ENCODE measurements at regions of chr7 and their contacts with region 1.

Region 1: GRCh38 chr7:138886501-138886917 is 88.5 kb upstream of the ATP6V0A4 start:
- DNase-seq: peak; percentile 47
- H3K4me3 Mint-ChIP-seq: no peak overlapping the region
- H3K27ac Mint-ChIP-seq: no peak overlapping the region
- H3K4me1 Mint-ChIP-seq: peaks cover 28% of the 10 kb centered on the region
- H3K27me3 Mint-ChIP-seq: peaks cover 7% of the 10 kb centered on the region

Region 2: DNA sequence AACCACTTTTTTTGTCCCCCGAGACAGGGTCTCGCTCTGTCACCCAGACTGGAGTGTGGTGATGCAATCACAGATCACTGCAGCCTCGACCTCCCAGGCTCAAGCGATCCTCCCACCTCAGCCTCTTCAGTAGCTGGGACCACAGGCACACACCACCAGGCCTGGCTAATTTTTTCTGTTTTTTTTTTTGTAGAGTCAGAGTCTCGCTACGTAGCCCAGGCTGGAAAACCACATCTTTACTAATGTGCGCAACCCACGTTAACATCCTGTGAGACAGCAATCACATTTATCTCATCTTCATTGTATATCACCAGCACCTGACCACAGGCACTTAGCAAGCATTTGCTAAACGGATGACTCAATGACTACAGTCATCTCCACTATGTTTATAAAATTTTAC is 10.7 kb before region 1 on chr7:
- intact Hi-C with region 1: loop called (anchors 1 kb)
- DNase-seq: peak; percentile 74
- H3K4me3 Mint-ChIP-seq: no peak overlapping the region
- H3K27ac Mint-ChIP-seq: peak overlapping the region; percentile 74
- H3K4me1 Mint-ChIP-seq: peaks cover 24% of the 10 kb centered on the region
- H3K27me3 Mint-ChIP-seq: no peaks in the 10 kb centered on the region

Region 3: DNA sequence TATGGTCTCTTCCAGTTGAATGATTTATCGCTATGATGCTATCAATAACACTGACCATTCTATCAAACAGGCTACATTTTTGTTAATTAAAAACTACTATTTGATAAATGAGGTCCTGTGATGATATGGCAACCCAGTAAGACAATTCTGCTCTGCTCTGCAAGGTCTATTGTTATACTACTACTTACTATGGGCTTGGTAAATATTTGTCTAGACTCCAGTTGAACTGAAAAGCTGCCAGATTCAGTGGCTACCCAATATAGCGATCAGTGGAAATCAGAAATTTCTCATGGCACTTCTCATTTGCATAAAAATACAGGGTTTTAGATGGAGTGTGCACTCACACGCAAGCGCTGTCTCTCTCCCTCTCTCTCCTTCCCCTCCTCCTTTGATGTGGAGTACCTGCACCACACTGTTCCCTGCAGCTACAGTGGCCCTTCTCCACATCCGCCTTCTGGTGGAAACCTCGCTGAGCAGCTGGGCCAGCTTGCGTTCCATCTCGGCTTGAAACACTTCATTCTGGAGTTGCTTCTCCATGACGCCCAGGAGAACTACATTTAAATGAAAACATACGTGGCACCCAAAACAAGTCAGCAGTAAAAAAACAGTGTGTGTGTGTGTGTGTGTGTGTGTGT is 16.8 kb after region 1 on chr7:
- intact Hi-C with region 1: loop called (anchors 1 kb)
- DNase-seq: peak; percentile 78
- H3K4me3 Mint-ChIP-seq: peak overlapping the region; percentile 74
- H3K27ac Mint-ChIP-seq: peak overlapping the region; percentile 84
- H3K4me1 Mint-ChIP-seq: peaks cover 49% of the 10 kb centered on the region
- H3K27me3 Mint-ChIP-seq: peaks cover 48% of the 10 kb centered on the region

Region 4: DNA sequence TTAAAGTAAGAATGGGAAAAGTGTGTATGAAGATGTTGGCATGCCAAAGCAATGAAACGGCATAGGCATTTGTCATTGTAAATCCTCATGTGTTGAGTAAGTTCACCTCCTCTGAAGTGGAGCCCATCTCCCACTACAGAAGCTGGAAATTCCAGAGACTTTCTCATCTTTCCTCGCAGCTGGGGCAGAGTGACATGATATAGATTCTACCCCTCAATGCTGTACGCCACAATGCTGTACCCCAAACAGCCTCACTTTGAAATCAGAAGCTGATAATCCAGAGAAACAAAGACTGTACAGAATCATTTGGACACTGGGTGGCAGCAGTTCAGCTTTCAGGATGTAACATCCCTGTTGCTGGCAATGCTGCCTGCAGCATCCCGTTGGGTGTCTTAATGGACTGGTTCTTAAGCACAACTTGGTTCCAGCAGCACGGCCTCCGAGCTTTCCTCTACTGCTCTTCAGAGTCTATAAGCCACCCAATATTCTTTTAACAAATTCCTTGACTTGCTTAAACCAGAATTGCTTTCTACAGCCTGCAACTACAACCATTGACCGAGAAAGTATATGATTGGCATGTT is 130.5 kb after region 1 on chr7:
- intact Hi-C with region 1: loop called (anchors 1 kb)
- DNase-seq: peak; percentile 52
- H3K4me3 Mint-ChIP-seq: no peak overlapping the region
- H3K27ac Mint-ChIP-seq: no peak overlapping the region
- H3K4me1 Mint-ChIP-seq: peaks cover 7% of the 10 kb centered on the region
- H3K27me3 Mint-ChIP-seq: peaks cover 11% of the 10 kb centered on the region

Region 5: GRCh38 chr7:139230774-139231512 is 344.4 kb after region 1 on chr7 and contains the start of gene UBN2:
- intact Hi-C with region 1: loop called (anchors 2 kb)
- DNase-seq: peak; percentile 89
- H3K4me3 Mint-ChIP-seq: peak within 1 kb of the TSS; percentile 100
- H3K27ac Mint-ChIP-seq: peak within 1 kb of the TSS; percentile 97
- H3K4me1 Mint-ChIP-seq: peaks cover 32% of the 10 kb centered on the region
- H3K27me3 Mint-ChIP-seq: peaks cover 27% of the 10 kb centered on the region
- total RNA-seq, gene UBN2: 14.7 and 15.6 TPM in 2 replicates

Measured in activated T-helper 1 cell treated with anti-CD3 and anti-CD28 coated beads, Interleukin-12 subunit alpha, Interleukin-12 subunit beta, Interleukin-2, Interleukin-4 antibody, amounts not matched to agents 30 ng/mL and 10 ng/mL and 1 ng/mL, durations not matched to agents 14 hours and 24 hours and 36 hours (primary cell).